ENCODE measurements at regions of chr2 and their contacts with region 1.

Region 1: DNA sequence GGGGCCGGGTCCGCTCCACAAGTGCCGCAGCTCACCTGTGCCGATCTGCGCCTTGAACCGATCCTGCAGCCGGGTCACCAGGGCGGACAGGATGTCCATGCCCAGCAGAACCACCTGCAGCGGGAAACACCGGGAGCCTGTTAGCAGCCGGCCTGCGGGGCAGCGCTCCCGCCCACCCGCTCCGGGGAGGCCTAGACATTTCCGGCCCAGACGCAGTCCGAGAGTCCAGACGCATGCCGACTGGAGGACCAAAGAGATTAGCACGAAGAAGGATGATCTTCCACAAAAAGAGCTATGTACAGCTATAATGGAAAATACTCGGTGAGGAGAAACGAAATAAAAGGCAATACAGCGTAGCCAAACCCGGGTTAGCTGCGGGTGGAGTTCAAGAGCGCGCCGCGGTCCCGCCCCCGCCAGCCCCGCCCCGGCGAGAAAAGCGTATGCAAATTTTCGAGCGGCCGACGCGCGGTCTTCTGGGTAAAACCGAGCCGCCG is 421 bp upstream of the RNU4ATAC start:
- DNase-seq: peak; percentile 78 to 90
- ATAC-seq: peak; percentile 80

Region 2: GRCh38 chr2:121649596-121650314 is 119.5 kb after region 1 on chr2:
- intact Hi-C with region 1: loop called in 1 of 2 experiments (anchors 10 kb)
- DNase-seq: peak; percentile 96 to 98
- ATAC-seq: peak; percentile 97

Region 3: DNA sequence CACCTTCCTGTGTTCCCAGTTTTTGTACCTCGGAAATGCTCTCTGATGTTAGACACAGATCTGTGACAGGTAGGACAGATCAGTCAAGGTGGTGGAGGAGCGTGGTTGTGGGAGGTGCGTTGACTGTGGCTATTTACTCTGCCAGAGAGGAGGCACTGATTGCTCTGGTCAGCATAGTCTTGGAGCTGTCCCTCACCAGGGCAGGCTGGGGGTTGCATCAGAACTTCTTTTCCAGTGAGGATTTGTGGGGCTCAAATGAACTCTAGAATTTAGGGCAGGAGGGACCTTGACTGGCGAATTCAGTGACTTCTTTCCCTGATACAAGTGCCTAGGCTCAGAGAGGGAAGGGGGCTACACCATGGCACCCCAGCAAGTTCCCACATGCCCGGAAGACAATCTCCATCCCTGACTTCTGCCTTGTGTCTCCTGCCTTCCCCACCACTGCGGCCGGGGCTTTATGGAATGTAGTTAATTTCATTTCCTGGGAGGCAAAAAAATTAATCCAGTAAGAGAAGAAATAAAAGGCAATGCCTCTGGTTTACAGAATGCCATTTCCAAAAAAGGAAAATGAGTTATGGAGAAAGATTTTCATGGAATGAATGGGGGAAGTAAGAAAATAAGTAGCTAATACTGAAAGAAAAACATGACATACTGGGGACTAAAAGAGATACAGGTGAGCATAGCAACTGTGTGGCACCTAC is 180.4 kb after region 1 on chr2:
- intact Hi-C with region 1: loop called in 1 of 2 experiments (anchors 10 kb)
- DNase-seq: no peak
- ATAC-seq: no peak